Activated B cell treated with CpG ODN at 0.5 μM for 24 hours (primary cell): ENCODE measurements at regions of chr4 and their contacts with region 1.

Region 1: DNA sequence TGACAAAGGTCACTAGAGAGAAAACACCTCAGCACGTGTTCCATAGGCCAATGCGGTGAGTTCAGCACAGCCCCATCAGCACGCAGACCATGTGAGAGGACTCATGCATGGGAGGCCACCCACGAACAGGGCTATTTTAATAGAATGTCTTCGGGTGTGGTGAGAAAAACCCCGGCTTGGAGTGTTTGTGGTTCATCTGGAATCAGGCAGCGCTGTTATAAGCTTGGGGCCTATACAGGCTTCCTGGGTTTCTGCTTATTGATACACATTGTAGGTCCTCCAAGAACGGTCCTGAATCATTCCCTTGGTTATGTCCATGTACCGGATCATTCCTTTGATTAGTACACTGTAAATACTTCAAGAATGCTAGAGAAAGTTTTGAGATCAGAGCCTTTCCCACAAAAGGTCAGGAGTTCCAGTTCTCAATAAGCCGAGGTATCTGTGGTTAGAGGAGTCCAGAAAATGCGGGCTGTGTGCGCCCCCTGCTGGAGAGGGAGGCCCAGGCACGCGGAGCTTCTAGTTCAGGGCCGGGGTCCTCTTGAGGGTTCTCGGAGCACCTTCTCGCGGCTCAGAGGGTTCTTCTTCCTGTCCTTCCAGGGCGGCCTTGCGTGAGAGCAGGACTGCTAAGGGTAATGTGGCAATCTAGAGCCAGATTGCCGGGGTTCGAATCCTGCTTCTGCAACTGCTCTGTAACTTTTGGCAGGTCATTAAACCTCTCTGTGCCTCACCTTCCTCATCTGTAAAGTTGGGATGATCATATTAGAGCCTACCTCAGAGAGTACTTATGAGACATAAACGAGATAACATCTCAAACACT is 51.8 kb downstream of the TLR10 start:
- DNase-seq: peak; percentile 74
- ATAC-seq: peak; percentile 89
- H3K4me3 Mint-ChIP-seq: peak overlapping the region; percentile 48
- H3K27ac Mint-ChIP-seq: peak overlapping the region; percentile 65
- H3K4me1 Mint-ChIP-seq: peaks cover 31% of the 10 kb centered on the region
- H3K27me3 Mint-ChIP-seq: no peaks in the 10 kb centered on the region
- CTCF ChIP-seq: no peak

Region 2: DNA sequence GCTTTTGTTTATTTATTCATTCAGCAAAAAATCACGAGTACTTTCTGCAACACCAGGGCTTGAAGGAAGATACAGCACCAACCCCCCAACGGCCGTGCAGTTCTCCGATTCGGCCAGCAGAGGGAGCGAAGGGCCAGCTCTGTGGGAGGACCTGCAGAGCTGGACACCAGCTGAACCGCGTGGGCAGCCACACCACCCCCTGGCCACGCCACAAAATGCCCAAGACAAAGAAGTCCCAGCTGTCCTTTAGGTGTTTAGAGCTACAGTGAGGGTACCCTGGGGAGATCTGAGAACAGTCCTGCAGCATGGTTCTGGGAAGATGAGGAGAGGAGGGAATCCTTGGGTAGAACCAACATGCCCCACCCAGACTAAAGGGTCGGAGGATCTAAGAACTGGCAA is 1128.0 kb before region 1 on chr4:
- CTCF ChIA-PET with region 1: no interaction called
- POLR2A ChIA-PET with region 1: no interaction called
- intact Hi-C with region 1: loop called (anchors 5 kb)
- DNase-seq: peak; percentile 59
- ATAC-seq: peak; percentile 84
- H3K4me3 Mint-ChIP-seq: no peak overlapping the region
- H3K27ac Mint-ChIP-seq: no peak overlapping the region
- H3K4me1 Mint-ChIP-seq: peaks cover 3% of the 10 kb centered on the region
- H3K27me3 Mint-ChIP-seq: peaks cover 2% of the 10 kb centered on the region
- CTCF ChIP-seq: peak; percentile 95

Region 3: GRCh38 chr4:38132107-38132673 is 598.8 kb before region 1 on chr4:
- CTCF ChIA-PET with region 1: no interaction called
- POLR2A ChIA-PET with region 1: no interaction called
- intact Hi-C with region 1: loop called (anchors 5 kb)
- DNase-seq: no peak
- ATAC-seq: peak; percentile 74
- H3K4me3 Mint-ChIP-seq: peak overlapping the region; percentile 8
- H3K27ac Mint-ChIP-seq: peak overlapping the region; percentile 78
- H3K4me1 Mint-ChIP-seq: peaks cover 44% of the 10 kb centered on the region
- H3K27me3 Mint-ChIP-seq: no peaks in the 10 kb centered on the region
- CTCF ChIP-seq: no peak

Region 4: DNA sequence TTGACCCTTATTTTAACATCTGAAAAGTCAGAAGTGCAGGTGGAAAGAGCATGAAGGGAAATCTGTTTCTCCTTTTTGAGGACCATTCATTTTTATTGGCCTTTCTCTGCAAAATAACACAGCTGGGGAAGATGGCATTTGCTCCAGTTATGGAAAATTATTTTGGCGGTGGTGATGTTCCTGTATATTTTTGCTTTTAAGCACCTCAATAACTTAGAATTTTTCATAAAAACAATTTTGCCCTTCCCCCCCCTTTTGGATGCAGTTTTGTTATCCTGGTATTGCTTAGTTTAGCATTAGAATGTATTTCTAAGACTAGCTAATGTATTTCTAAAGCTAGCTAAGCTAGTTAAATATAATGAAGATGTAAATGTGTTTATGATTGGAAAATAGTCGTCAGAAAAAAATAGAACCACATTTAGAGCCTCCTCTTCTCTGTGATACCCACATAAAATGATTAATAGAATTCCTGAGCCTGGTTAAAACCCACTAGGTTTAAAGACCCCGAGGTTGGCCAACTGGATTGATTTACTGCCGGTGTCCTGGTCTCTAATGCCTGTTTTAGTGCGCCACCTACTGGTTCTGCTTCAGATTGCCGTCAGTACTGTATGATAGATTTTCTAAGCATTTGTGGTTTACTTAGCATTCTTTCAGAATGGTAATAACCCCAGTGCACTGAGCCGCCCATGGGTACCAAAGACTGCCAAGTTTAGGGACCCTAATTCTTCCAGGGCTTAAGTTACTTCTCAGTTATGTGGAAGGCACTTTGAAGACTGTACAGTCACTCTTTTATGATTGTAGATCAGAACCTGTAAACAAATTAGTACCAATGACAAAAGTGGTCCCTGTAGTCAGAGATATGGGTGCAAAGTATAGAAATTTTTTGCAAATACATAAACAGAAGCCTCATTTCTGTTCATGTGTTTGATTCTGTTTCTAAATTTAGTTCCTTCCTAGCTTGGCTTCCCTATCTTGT is 55.6 kb before region 1 on chr4:
- CTCF ChIA-PET with region 1: interaction called, 21 read pairs
- POLR2A ChIA-PET with region 1: interaction called, 3 read pairs
- intact Hi-C with region 1: loop called (anchors 1 kb)
- DNase-seq: peak; percentile 56
- ATAC-seq: peak; percentile 75
- H3K4me3 Mint-ChIP-seq: peak overlapping the region; percentile 53
- H3K27ac Mint-ChIP-seq: peak overlapping the region; percentile 46
- H3K4me1 Mint-ChIP-seq: peaks cover 66% of the 10 kb centered on the region
- H3K27me3 Mint-ChIP-seq: no peaks in the 10 kb centered on the region
- CTCF ChIP-seq: peak; percentile 21

Region 5: DNA sequence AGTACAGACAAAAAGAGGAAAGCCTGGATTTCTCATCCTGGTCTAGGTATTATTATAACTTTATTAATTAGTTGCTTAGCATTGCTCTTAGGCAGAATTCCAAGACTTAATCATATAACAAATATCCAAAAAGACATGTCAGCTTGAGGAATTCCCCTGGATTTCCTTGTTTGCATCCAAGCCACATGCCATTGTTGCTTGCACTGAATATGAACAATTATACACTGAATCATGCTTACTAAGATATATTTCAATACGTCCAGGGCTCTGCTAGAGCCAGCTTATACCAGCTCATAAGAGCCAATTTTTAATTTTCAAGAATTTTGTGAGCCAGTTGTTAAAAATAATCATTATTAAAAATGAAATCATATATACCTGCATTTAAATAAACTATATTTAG is 57.3 kb after region 1 on chr4:
- CTCF ChIA-PET with region 1: no interaction called
- POLR2A ChIA-PET with region 1: no interaction called
- intact Hi-C with region 1: no loop called
- DNase-seq: no peak
- ATAC-seq: no peak
- H3K4me3 Mint-ChIP-seq: no peak overlapping the region
- H3K27ac Mint-ChIP-seq: no peak overlapping the region
- H3K4me1 Mint-ChIP-seq: peaks cover 38% of the 10 kb centered on the region
- H3K27me3 Mint-ChIP-seq: no peaks in the 10 kb centered on the region
- CTCF ChIP-seq: no peak

Region 6: DNA sequence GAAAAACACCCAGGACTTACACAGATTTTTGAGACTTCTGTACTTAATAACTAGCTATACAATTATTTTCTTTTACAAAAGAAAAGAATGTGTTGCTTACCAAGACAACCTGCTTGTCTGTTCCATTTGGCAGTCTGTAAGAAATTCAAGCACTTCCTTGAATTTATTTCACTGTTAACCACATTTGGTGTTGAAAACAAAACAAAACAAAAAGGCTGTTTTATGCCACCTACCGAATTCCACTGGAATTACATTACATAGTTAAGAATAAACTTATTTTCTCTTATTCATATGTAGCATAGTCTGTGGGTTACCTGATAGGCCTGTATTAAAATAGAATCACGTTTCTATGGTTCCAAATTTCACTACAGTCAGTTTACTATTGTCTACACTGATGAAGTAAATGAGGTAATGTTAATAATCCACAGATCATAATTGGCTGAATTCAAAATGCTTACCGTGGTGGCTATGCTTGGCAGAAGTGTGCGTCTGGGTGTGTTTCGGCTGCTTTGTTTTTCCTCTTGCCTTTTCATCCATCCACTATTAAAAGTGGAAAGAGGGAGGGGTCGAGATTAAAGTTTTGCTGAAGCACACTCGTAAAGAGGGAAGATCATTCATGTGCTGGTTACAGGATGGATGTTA is 73.7 kb after region 1 on chr4 and contains the start of gene TLR1:
- CTCF ChIA-PET with region 1: no interaction called
- POLR2A ChIA-PET with region 1: no interaction called
- intact Hi-C with region 1: loop called (anchors 2 kb)
- DNase-seq: no peak
- ATAC-seq: peak; percentile 45
- H3K4me3 Mint-ChIP-seq: peak within 1 kb of the TSS; percentile 86
- H3K27ac Mint-ChIP-seq: peak within 1 kb of the TSS; percentile 93
- H3K4me1 Mint-ChIP-seq: peaks cover 68% of the 10 kb centered on the region
- H3K27me3 Mint-ChIP-seq: no peaks in the 10 kb centered on the region
- CTCF ChIP-seq: peak; percentile 54
- total RNA-seq, gene TLR1: 39.6 and 43.0 TPM in 2 replicates